CD8-positive, alpha-beta T cell (primary cell): ENCODE measurements at regions of chr18 and their contacts with region 1.

Region 1: DNA sequence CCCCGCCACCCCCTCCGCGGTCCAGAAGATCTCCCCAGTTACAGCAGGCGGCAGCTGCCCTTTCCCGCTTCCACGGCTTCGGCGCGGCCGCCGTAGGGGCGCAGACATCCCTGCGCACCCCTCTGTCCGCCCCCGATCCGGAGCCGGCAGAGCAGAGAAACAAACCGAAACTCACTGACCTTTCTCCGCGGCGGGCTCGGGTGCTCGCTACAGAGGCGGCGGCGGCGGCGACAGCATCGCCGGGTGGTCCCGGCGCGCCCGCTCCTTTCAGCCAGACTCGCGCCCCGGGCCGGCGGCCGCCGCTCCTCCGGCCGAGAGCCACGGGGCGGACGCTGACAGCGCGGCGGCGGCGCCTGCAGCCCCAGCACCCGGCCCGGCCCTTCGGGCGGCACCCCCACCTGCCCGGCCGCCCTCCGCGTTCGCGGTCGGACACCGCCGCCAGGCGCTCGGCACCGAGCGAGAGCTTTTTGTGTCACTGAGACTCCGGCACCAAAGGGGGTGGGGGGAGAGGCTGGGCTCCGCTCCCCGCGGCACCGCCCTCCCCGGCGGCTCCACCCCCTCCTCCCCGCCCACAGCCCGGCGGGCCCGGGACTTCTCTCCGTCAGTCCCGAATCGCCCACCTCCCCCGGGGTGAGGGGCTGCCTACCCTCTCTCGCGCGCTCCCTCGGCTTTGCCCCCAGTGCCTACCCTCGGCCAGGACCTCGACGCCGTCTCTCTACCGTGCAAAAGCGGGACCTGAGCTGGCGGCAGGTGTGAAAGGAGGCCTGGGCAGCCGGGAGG is 1.4 kb upstream of the RNF152 start:
- DNase-seq: peak; percentile 35 to 81 (median 65)
- ATAC-seq: peak; percentile 88
- H3K4me3 ChIP-seq: peak overlapping the region; percentile 60 to 74
- H3K4me3 Mint-ChIP-seq: peak overlapping the region; percentile 81
- H3K27ac ChIP-seq: no peak overlapping the region
- H3K27ac Mint-ChIP-seq: no peak overlapping the region
- H3K4me1 ChIP-seq: peaks cover 9% of the 10 kb centered on the region
- H3K4me1 Mint-ChIP-seq: peaks cover 13% of the 10 kb centered on the region
- H3K27me3 ChIP-seq: peaks cover 0 to 12% of the 10 kb centered on the region in 2 experiments
- H3K27me3 Mint-ChIP-seq: peaks cover 35% of the 10 kb centered on the region
- CTCF ChIP-seq: no peak

Region 2: GRCh38 chr18:61581578-61582201 is 312.5 kb before region 1 on chr18:
- CTCF ChIA-PET with region 1: no interaction called
- POLR2A ChIA-PET with region 1: no interaction called
- intact Hi-C with region 1: loop called in 1 of 2 experiments (anchors 2 kb)
- DNase-seq: peak; percentile 27 to 80 (median 59)
- ATAC-seq: peak; percentile 65
- H3K4me3 ChIP-seq: no peak overlapping the region
- H3K4me3 Mint-ChIP-seq: no peak overlapping the region
- H3K27ac ChIP-seq: no peak overlapping the region
- H3K27ac Mint-ChIP-seq: no peak overlapping the region
- H3K4me1 ChIP-seq: peaks cover 8% of the 10 kb centered on the region
- H3K4me1 Mint-ChIP-seq: peaks cover 7% of the 10 kb centered on the region
- H3K27me3 ChIP-seq: peaks cover 0 to 6% of the 10 kb centered on the region in 2 experiments
- H3K27me3 Mint-ChIP-seq: peaks cover 32% of the 10 kb centered on the region
- CTCF ChIP-seq: peak; percentile 94

Region 3: DNA sequence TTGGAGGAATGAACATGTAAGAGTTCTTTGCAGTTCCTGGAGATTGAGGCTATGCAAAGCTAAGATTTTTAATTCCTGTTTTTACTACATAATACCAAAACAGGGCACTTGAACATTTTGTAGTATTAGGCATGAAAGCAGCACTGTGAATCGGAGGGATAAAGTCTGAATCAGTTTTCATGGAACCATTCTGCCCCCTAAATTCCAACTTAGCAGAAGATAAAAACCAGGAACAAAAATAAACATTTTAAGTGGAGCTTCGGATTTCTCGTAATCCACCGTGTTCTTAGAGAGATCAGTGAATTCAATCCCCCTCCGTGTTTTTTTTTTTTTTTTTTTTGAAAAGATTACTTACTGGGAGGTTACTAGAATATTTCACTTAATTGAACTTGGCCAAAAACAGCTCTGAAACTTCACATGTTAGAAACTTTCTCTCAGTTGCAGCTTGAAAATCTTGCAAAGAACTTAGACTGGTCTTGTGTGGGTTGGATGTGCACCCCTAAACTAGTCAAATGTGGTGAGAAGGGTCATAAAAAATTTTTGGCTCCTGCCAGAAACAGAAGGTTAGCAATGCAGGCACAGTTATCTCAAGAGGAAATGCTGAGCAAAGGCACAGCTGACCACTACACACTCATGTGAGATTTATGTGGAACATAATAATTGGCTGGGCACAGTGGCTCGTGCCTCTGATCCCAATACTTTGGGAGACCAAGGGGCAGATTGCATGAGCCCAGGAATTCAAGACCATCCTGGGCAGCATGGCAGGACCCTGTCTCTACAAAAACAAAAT is 144.0 kb after region 1 on chr18:
- CTCF ChIA-PET with region 1: no interaction called
- POLR2A ChIA-PET with region 1: no interaction called
- intact Hi-C with region 1: no loop called
- DNase-seq: no peak
- ATAC-seq: no peak
- H3K4me3 ChIP-seq: no peak overlapping the region
- H3K4me3 Mint-ChIP-seq: no peak overlapping the region
- H3K27ac ChIP-seq: no peak overlapping the region
- H3K27ac Mint-ChIP-seq: no peak overlapping the region
- H3K4me1 ChIP-seq: peaks cover 5% of the 10 kb centered on the region
- H3K4me1 Mint-ChIP-seq: peaks cover 11% of the 10 kb centered on the region
- H3K27me3 ChIP-seq: no peaks in the 10 kb centered on the region
- H3K27me3 Mint-ChIP-seq: no peaks in the 10 kb centered on the region
- CTCF ChIP-seq: no peak

Region 4: DNA sequence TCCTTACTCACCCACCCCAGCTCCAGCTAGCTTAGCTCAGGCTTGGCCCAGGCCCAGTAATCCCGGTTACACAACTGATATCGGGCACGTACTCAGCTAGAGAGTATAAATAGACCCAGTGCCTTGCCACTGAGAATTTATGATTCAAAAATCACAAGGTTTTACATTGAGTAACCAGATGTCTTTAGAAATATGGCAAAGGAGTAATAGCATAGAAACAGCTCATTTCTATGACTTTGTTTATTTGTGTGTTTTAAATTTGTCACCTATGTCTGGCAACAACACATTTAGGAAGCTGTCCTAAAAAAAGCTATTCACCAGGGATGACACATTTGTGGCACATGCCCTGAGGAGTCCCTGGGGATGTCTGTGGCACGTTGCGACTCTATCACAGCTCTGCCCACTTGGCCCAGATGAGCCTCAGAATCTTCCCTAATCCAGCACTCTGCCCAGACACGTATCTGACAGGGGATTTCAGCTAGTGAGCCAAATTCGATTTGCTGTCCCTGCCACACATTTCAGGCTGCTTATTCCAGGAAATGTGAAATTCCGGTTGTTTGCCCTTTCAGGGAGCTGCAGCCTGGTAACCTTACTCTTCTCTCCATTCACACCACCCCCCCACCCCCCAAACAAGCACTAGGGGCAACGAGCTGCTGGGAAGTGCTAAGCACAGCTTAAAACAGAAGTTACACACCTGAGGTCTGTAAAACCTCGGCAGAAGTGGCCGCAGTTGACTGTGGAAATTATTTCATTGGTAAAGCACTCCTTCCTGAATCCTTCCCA is 543.3 kb after region 1 on chr18:
- CTCF ChIA-PET with region 1: no interaction called
- POLR2A ChIA-PET with region 1: no interaction called
- intact Hi-C with region 1: no loop called
- DNase-seq: no peak
- ATAC-seq: no peak
- H3K4me3 ChIP-seq: no peak overlapping the region
- H3K4me3 Mint-ChIP-seq: no peak overlapping the region
- H3K27ac ChIP-seq: no peak overlapping the region
- H3K27ac Mint-ChIP-seq: no peak overlapping the region
- H3K4me1 ChIP-seq: no peaks in the 10 kb centered on the region
- H3K4me1 Mint-ChIP-seq: no peaks in the 10 kb centered on the region
- H3K27me3 ChIP-seq: no peaks in the 10 kb centered on the region
- H3K27me3 Mint-ChIP-seq: no peaks in the 10 kb centered on the region
- CTCF ChIP-seq: no peak